ENCODE measurements at regions of chr9 and their contacts with region 1.

Region 1: DNA sequence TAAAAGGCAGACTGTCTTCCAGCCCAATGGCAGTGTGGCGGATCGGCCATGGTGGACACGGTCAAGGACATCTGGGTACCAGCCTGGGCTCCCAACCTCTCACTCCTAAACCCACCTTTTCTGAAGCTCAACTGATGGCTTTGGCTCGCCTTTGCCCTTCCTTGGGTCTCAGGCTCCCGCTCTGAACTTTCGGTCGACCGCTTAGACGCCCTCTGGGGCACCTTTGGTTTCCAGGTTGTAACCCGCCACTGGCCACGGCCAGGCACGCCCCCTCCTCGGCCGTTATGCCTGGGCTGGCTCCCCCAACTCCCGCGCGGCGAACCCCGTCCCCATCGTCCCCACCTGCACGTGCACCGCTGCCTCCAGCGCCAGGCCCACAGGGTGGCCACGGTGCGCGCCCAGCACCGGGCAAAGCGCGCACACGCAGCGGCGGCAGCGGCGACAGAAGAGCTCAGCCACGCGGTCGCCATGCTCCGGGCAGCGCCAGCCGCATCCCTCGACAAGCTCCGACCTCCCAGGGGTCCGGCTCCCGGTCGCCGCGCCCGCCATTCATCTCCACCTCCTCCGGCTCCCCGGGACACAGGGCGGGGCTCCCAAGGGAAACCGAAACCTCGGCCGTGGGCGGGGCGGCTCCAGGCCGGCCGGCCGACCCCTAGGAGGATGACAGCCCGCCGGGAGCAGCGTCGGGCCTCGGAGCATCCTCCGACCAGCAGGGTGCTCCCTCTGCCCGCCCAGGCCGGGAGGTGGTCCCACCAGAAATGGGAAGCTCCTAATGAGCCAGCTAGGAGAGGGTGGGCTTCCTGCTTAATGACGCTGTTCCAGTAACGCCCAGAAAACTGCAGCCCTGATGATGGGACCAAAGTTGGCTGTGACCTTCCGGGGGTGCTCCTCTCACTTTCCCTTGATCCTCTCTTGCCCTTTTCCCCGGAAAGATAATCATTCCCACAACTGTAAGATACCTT is at the start of gene TRIM14:
- DNase-seq: peak; percentile 72
- ATAC-seq: peak; percentile 54
- H3K4me3 Mint-ChIP-seq: peak within 1 kb of the TSS; percentile 80
- H3K27ac Mint-ChIP-seq: peak within 1 kb of the TSS; percentile 94
- H3K4me1 Mint-ChIP-seq: peaks cover 38% of the 10 kb centered on the region
- H3K27me3 Mint-ChIP-seq: no peaks in the 10 kb centered on the region
- CTCF ChIP-seq: no peak
- total RNA-seq, gene TRIM14: 39.6 to 41.8 TPM

Region 2: DNA sequence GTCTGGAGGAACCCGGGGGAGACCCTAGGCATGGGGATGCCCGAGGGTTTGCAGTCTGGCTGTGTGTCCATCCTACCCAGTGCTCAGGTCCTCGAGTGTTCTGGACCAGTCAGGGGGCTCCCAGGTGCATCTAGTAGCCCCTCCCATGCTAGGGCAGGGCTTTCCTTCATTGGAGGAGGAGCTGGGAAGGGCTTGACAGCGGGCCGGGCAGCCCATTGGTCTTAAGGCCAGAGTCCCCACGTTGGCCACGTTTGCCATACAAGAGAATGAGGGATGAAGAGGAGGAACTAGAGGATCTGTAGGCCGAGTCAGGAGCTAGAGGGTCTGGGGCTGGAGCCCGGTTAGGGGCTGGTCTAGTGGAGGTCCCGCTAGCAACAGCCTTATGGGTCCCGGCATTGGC is 1042.7 kb before region 1 on chr9:
- CTCF ChIA-PET with region 1: no interaction called
- POLR2A ChIA-PET with region 1: no interaction called
- intact Hi-C with region 1: no loop called
- DNase-seq: no peak
- ATAC-seq: no peak
- H3K4me3 Mint-ChIP-seq: no peak overlapping the region
- H3K27ac Mint-ChIP-seq: no peak overlapping the region
- H3K4me1 Mint-ChIP-seq: no peaks in the 10 kb centered on the region
- H3K27me3 Mint-ChIP-seq: peaks cover 48% of the 10 kb centered on the region
- CTCF ChIP-seq: no peak

Region 3: DNA sequence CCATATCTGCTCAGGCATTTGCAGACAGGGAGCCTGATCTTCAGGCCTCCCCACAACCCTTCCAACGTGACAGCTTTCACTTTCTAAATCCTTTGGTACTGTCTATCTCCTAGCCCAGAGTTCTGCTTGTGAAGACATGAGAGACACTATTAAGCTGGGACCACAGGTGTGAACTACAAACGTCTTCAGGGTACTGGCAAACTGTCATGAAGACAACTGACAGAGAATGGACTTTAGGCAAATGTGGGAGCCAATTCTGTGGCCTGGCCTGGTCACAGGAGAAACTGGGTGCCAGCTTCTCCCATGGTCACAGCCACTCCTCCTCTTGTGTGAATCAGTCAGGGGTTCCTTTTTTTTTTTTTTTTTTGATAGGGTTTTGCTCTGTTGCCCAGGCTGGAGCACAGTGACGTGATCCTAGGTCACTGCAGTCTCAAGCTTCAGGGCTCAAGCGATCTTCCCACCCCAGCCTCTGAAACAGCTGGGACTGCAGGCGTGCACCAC is 10.3 kb before region 1 on chr9:
- CTCF ChIA-PET with region 1: interaction called, 22 read pairs
- POLR2A ChIA-PET with region 1: interaction called, 26 read pairs
- intact Hi-C with region 1: no loop called
- DNase-seq: peak; percentile 55
- ATAC-seq: peak; percentile 85
- H3K4me3 Mint-ChIP-seq: peak overlapping the region; percentile 24
- H3K27ac Mint-ChIP-seq: peak overlapping the region; percentile 96
- H3K4me1 Mint-ChIP-seq: peaks cover 70% of the 10 kb centered on the region
- H3K27me3 Mint-ChIP-seq: no peaks in the 10 kb centered on the region
- CTCF ChIP-seq: no peak

Region 4: GRCh38 chr9:98192503-98193335 is 73.8 kb after region 1 on chr9 and contains the start of gene CORO2A:
- CTCF ChIA-PET with region 1: interaction called, 14 read pairs
- POLR2A ChIA-PET with region 1: interaction called, 25 read pairs
- intact Hi-C with region 1: loop called (anchors 5 kb)
- DNase-seq: peak; percentile 81
- ATAC-seq: peak; percentile 80
- H3K4me3 Mint-ChIP-seq: peak within 1 kb of the TSS; percentile 81
- H3K27ac Mint-ChIP-seq: peak within 1 kb of the TSS; percentile 49
- H3K4me1 Mint-ChIP-seq: peaks cover 32% of the 10 kb centered on the region
- H3K27me3 Mint-ChIP-seq: no peaks in the 10 kb centered on the region
- CTCF ChIP-seq: peak; percentile 25
- total RNA-seq, gene CORO2A: 12.2 to 13.4 TPM

Region 5: GRCh38 chr9:98255578-98256296 is 136.8 kb after region 1 on chr9 and contains the start of gene TBC1D2:
- CTCF ChIA-PET with region 1: interaction called, 17 read pairs
- POLR2A ChIA-PET with region 1: interaction called, 13 read pairs
- intact Hi-C with region 1: no loop called
- DNase-seq: peak; percentile 97
- ATAC-seq: peak; percentile 93
- H3K4me3 Mint-ChIP-seq: peak within 1 kb of the TSS; percentile 85
- H3K27ac Mint-ChIP-seq: peak within 1 kb of the TSS; percentile 97
- H3K4me1 Mint-ChIP-seq: peaks cover 16% of the 10 kb centered on the region
- H3K27me3 Mint-ChIP-seq: no peaks in the 10 kb centered on the region
- CTCF ChIP-seq: peak; percentile 18
- total RNA-seq, gene TBC1D2: 1.5 TPM

Region 6: DNA sequence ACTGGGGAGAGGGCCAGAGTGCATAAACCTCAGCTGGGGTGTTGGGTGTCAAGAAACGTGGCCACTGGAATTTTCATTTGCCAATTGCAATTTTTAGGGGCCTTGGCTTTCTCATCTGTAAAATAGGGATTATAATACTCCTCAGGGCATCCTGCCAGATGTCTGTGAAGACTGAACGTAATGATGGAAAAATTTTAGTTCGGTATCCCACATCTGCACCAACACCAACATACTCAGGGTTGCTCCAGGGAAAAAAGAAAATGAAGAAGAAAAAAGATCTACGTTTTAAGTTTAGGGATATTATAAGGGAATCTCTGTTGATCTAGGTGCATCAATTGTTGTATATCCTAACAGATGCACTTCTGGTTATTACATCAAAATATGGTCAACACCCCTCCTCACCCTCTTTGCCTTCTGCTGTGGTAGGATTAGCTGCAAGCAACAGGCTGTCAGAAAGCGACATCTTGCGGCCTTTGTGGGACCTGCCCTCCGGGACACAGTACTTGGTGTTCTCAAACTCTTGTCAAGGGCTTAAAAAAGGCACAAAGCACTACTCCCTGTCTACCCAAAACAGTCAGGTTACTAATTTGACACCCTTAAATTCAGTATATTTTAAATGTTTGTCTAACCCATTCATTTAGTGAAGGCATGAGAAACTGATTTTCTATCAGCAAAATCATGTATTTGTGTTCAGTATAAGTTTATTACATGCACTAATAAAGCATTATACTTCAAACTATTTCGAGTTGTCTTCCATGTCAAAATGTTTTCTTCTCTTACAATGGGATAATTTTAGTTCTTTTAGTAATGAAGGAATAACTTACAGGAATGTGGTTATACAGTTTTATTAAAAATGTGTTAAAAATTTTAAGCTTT is 144.8 kb after region 1 on chr9:
- CTCF ChIA-PET with region 1: interaction called, 13 read pairs
- POLR2A ChIA-PET with region 1: no interaction called
- intact Hi-C with region 1: no loop called
- DNase-seq: peak; percentile 89
- ATAC-seq: peak; percentile 99
- H3K4me3 Mint-ChIP-seq: no peak overlapping the region
- H3K27ac Mint-ChIP-seq: no peak overlapping the region
- H3K4me1 Mint-ChIP-seq: no peaks in the 10 kb centered on the region
- H3K27me3 Mint-ChIP-seq: no peaks in the 10 kb centered on the region
- CTCF ChIP-seq: peak; percentile 82